Activated CD8-positive, alpha-beta T cell treated with anti-CD3 and anti-CD28 coated beads, Interleukin-2, amount 10 ng/mL, durations not matched to agents 7 days and 5 days (primary cell): ENCODE measurements at regions of chr1 and their contacts with region 1.

Region 1: GRCh38 chr1:161045750-161046571 is at the start of gene USF1:
- DNase-seq: peak; percentile 96
- ATAC-seq: peak; percentile 68
- H3K4me3 Mint-ChIP-seq: peak within 1 kb of the TSS; percentile 85
- H3K27ac Mint-ChIP-seq: peak within 1 kb of the TSS; percentile 99
- H3K4me1 Mint-ChIP-seq: peaks cover 49% of the 10 kb centered on the region
- H3K27me3 Mint-ChIP-seq: no peaks in the 10 kb centered on the region
- total RNA-seq, gene USF1: 81.6 to 83.2 TPM

Region 2: DNA sequence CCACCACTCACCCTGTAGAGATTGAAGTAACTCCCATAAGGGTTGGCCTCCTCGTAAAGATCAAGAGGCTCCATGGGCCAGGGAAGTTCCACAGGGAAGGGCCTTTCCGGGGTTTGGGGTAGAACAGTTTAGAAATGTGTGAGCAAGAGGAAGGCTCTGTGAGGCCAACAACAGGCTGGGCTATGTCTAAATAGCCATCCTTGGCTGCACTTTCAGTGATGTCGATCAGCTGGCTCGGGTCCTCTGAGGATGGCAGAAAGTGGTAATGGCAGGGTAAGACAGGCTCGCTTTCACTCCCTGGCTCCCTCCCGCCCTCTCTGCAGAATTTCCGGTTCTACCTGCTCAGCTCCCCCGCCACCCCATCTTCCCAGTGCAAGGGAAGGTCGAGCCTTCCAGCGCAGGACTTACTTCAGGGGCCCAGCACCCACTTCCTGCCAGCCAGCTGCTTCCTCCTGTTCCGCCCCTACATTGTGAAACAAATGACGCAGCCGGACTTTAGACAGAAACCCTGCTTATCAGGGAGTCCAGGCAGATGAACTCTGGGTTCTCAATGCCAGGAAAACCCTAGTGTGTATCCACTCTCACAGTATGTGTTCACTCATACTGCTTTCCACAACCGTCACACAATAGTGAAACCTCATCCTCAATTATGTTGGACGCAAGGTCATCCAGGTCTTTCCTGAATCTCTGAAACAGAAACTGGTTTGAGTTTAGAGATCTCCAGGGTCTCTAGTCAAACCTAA is 32.3 kb before region 1 on chr1:
- CTCF ChIA-PET with region 1: interaction called, 4 read pairs
- POLR2A ChIA-PET with region 1: interaction called, 15 read pairs
- DNase-seq: peak; percentile 80
- ATAC-seq: peak; percentile 91
- H3K4me3 Mint-ChIP-seq: peak overlapping the region; percentile 70
- H3K27ac Mint-ChIP-seq: peak overlapping the region; percentile 93
- H3K4me1 Mint-ChIP-seq: peaks cover 33% of the 10 kb centered on the region
- H3K27me3 Mint-ChIP-seq: no peaks in the 10 kb centered on the region

Region 3: GRCh38 chr1:161071886-161072371 is 26.0 kb after region 1 on chr1:
- CTCF ChIA-PET with region 1: interaction called, 114 read pairs
- POLR2A ChIA-PET with region 1: interaction called, 141 read pairs
- DNase-seq: peak; percentile 75
- ATAC-seq: no peak
- H3K4me3 Mint-ChIP-seq: no peak overlapping the region
- H3K27ac Mint-ChIP-seq: peak overlapping the region; percentile 26
- H3K4me1 Mint-ChIP-seq: peaks cover 60% of the 10 kb centered on the region
- H3K27me3 Mint-ChIP-seq: no peaks in the 10 kb centered on the region

Region 4: GRCh38 chr1:161117759-161118581 is 72.0 kb after region 1 on chr1 and contains the starts of genes NIT1 and PFDN2:
- CTCF ChIA-PET with region 1: interaction called, 4 read pairs
- POLR2A ChIA-PET with region 1: interaction called, 25 read pairs
- DNase-seq: peak; percentile 90
- ATAC-seq: peak; percentile 88
- H3K4me3 Mint-ChIP-seq: peak within 1 kb of the TSS; percentile 92
- H3K27ac Mint-ChIP-seq: peak within 1 kb of the TSS; percentile 95
- H3K4me1 Mint-ChIP-seq: peaks cover 56% of the 10 kb centered on the region
- H3K27me3 Mint-ChIP-seq: no peaks in the 10 kb centered on the region
- total RNA-seq, gene NIT1: 34.1 to 35.2 TPM
- total RNA-seq, gene PFDN2: 66.3 to 68.0 TPM

Region 5: DNA sequence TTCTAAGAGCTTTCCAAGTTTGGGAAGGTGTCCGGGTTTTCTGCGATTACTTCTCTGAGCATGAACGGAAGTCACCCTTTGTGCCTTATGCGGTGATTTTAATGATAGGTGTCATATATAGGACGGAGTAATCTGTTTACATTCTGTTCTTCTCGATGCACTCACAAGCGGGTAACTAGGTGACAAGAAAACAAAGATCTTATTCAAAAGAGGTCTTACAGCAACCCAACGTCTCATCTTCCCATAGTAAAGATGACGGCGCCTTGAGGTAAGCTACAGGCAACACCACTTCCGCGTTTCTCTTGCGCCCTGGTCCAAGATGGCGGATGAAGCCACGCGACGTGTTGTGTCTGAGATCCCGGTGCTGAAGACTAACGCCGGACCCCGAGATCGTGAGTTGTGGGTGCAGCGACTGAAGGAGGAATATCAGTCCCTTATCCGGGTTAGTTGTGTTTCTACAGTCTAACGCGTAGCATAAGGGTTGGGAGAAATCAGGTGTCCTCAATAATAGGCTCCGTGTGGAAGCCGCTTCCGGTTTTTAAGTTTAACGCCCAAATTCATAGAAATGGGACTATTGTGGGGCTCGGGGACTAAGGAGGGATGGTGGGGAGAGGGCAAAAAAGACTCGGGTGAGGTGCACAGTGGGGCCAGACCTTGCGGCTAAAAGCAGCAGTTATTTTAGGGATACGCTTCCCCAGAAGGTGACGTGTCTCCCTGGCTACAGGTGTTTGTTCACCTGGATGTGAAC is 107.9 kb after region 1 on chr1 and contains the start of gene UFC1:
- CTCF ChIA-PET with region 1: no interaction called
- POLR2A ChIA-PET with region 1: interaction called, 12 read pairs
- DNase-seq: peak; percentile 91
- ATAC-seq: peak; percentile 94
- H3K4me3 Mint-ChIP-seq: peak within 1 kb of the TSS; percentile 88
- H3K27ac Mint-ChIP-seq: peak within 1 kb of the TSS; percentile 100
- H3K4me1 Mint-ChIP-seq: peaks cover 26% of the 10 kb centered on the region
- H3K27me3 Mint-ChIP-seq: no peaks in the 10 kb centered on the region
- total RNA-seq, gene UFC1: 103 to 104 TPM